ENCODE measurements at regions of chr3 and their contacts with region 1.

Region 1: GRCh38 chr3:23916886-23917678 is at the starts of genes NKIRAS1 and RPL15:
- DNase-seq: peak; percentile 98
- H3K4me3 Mint-ChIP-seq: peak within 1 kb of the TSS; percentile 92
- H3K27ac Mint-ChIP-seq: peak within 1 kb of the TSS; percentile 76
- H3K4me1 Mint-ChIP-seq: peaks cover 26% of the 10 kb centered on the region
- H3K27me3 Mint-ChIP-seq: no peaks in the 10 kb centered on the region
- CTCF ChIP-seq: peak; percentile 42
- total RNA-seq, gene NKIRAS1: 6.8 and 9.7 TPM in 2 replicates
- total RNA-seq, gene RPL15: 2,310 and 2,617 TPM in 2 replicates

Region 2: DNA sequence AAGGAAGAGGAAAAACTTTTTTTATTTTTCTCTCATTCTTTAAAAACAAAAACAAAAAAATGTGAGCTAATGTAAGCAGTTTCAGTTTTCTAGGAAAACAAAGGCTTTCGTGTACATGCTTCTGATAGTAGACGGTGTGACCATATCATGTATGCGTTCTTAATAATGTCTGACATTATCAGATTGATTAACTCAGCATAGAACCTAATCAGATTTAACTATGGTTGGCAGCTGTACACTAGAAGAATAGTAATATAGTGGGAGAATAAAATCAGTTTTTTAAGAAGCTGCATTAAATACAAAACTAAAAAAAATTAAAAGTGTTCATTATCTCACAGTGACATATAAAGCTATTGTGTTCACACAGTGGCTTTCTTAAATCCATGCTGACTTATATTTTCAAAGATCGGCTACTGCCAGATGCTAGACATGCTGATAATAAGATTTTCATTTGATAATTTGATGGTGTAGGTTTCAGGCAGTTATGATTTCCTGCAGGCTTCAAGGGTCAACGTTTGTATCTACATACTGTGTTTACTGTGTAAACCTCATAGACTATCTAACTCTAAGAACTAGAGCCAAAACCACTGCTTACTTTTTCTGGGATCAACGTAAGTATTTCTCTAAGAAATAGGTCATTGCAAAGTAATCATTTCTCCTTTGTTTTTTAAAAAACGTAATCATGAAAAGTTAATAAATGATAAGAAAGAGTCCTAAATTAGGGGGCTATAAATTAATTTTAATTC is 640.0 kb before region 1 on chr3:
- CTCF ChIA-PET with region 1: no interaction called
- POLR2A ChIA-PET with region 1: no interaction called
- intact Hi-C with region 1: no loop called
- DNase-seq: no peak
- H3K4me3 Mint-ChIP-seq: no peak overlapping the region
- H3K27ac Mint-ChIP-seq: no peak overlapping the region
- H3K4me1 Mint-ChIP-seq: peaks cover 11% of the 10 kb centered on the region
- H3K27me3 Mint-ChIP-seq: no peaks in the 10 kb centered on the region
- CTCF ChIP-seq: no peak

Region 3: GRCh38 chr3:23805633-23806533 is 111.2 kb before region 1 on chr3 and contains the start of gene UBE2E1:
- CTCF ChIA-PET with region 1: no interaction called
- POLR2A ChIA-PET with region 1: interaction called, 29 read pairs
- intact Hi-C with region 1: no loop called
- DNase-seq: peak; percentile 60
- H3K4me3 Mint-ChIP-seq: peak within 1 kb of the TSS; percentile 92
- H3K27ac Mint-ChIP-seq: peak within 1 kb of the TSS; percentile 96
- H3K4me1 Mint-ChIP-seq: peaks cover 40% of the 10 kb centered on the region
- H3K27me3 Mint-ChIP-seq: no peaks in the 10 kb centered on the region
- CTCF ChIP-seq: no peak
- total RNA-seq, gene UBE2E1: 128 and 130 TPM in 2 replicates

Region 4: DNA sequence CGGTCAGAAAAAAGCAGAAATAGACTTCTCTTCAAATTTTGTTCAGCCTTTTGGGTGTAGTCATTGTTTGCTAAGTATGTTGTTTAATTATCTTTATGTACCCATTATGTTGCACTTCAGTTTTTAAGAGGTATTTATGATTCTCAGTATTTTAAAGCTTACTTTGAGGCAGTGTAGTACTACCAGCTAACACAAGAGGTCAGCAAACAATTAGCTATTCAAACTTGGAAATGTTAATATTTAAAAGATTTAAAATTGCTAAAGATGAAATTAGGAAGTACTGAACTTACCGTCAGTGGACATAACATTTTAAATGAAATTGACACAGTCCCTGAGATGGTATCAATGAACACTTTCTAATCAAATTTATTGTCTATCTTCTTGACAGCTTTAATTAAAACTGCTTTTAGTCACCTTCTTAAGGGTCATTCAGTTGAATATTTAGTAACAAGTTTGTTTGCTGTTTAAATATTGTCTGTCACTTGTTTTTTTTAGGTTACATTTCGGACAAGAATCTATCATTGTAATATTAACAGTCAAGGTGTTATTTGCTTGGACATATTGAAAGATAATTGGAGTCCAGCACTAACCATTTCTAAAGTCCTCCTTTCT is 28.4 kb before region 1 on chr3:
- CTCF ChIA-PET with region 1: interaction called, 4 read pairs
- POLR2A ChIA-PET with region 1: interaction called, 28 read pairs
- intact Hi-C with region 1: no loop called
- DNase-seq: peak; percentile 35
- H3K4me3 Mint-ChIP-seq: no peak overlapping the region
- H3K27ac Mint-ChIP-seq: no peak overlapping the region
- H3K4me1 Mint-ChIP-seq: peaks cover 6% of the 10 kb centered on the region
- H3K27me3 Mint-ChIP-seq: no peaks in the 10 kb centered on the region
- CTCF ChIP-seq: peak; percentile 72

Region 5: DNA sequence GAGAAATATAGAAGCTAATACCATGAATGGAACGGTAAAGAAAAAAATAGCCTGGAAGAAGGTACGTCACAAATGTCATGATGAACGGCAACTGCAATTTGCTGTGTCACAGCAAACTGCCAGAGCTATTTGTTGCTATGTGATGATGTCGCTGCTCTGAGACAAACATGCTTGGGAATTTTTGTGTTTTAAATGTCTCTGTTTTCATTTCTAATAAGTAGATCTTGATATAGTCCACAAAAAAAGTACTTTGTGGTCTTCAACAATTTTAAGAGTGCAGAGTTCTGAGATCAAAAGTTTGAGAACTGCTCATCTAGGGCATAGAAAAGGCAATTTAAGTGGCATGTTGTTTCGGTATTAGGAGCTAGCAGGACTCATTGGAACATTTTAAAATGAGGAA is 23.7 kb after region 1 on chr3:
- CTCF ChIA-PET with region 1: interaction called, 3 read pairs
- POLR2A ChIA-PET with region 1: interaction called, 234 read pairs
- intact Hi-C with region 1: no loop called
- DNase-seq: no peak
- H3K4me3 Mint-ChIP-seq: no peak overlapping the region
- H3K27ac Mint-ChIP-seq: no peak overlapping the region
- H3K4me1 Mint-ChIP-seq: peaks cover 11% of the 10 kb centered on the region
- H3K27me3 Mint-ChIP-seq: no peaks in the 10 kb centered on the region
- CTCF ChIP-seq: no peak

Region 6: DNA sequence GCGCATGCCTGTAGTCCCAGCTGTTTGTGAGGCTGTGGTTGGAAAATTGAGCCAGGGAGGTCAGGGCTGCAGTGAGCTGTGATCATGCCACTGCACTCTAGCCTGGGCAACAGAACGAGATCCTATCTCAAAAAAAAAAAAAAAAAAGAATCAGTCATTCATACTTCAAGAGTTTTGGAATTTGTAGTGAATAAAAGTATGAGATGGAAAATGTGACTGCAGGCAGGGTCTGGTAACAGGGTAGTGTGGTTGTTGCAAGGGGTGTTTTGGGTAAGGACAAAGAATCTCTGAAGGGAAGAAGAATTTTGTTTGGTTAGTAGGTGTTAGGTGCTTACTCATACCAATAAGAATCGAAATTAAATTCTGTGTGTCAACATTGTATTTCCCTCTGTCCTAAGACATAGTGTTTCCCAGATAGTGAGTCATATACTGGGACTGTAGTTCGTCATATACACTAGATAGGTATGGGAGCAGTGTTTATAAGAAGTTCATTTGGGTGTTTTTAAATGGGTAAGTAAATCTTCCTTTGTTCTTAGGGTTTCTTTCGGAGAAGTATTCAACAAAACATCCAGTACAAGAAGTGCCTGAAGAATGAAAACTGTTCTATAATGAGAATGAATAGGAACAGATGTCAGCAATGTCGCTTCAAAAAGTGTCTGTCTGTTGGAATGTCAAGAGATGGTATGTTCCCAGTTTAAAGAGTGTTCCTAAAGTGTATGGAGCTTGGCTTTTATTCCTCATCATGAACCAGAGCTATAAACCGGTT is 42.2 kb after region 1 on chr3:
- CTCF ChIA-PET with region 1: interaction called, 3 read pairs
- POLR2A ChIA-PET with region 1: interaction called, 61 read pairs
- intact Hi-C with region 1: no loop called
- DNase-seq: peak; percentile 88
- H3K4me3 Mint-ChIP-seq: peak overlapping the region; percentile 20
- H3K27ac Mint-ChIP-seq: peak overlapping the region; percentile 61
- H3K4me1 Mint-ChIP-seq: peaks cover 14% of the 10 kb centered on the region
- H3K27me3 Mint-ChIP-seq: no peaks in the 10 kb centered on the region
- CTCF ChIP-seq: no peak

Region 7: DNA sequence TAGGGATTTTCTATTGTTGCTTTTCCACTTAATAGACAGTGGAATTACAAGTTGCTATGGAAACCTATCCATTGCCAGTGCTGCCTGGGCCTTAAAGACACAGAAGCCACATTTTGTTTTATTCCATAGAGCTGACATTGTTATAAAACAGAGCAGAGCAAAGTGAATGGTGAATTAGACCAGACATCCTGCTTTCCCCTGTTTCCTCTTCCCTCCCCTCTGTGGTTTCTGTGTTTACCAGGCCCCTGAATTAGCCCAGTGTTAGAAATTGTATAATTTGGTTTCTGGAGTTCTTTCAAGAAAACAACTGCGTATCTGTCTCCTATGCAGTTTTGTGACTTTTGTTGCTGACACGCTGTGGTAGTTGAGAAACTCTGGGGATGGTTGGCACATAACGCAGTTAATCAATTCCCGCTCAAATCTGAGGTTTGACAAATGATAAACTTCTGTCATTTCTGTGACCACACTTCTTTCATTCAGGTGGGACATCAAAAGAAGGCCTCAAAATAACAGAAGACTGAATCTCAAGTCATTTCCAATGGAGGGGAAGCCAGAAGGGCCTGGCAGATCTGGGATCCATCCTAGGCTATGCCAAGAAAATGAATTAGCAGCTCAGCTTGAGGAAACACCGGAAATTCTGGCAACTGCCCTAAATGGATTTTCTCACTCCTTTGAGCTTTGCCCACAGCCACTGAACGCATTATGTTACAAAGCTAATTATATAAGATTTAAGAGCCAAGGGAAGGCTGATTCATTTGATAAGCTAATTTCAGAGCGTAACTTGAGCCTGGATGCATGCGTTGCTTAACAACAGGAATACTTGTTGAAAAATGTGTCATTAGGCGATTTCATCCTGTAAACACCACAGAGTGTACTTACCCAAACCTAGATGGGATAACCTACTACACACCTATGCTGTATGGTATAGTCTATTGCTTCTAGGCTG is 74.9 kb after region 1 on chr3:
- CTCF ChIA-PET with region 1: no interaction called
- POLR2A ChIA-PET with region 1: interaction called, 5 read pairs
- intact Hi-C with region 1: loop called (anchors 5 kb)
- DNase-seq: peak; percentile 65
- H3K4me3 Mint-ChIP-seq: no peak overlapping the region
- H3K27ac Mint-ChIP-seq: no peak overlapping the region
- H3K4me1 Mint-ChIP-seq: no peaks in the 10 kb centered on the region
- H3K27me3 Mint-ChIP-seq: no peaks in the 10 kb centered on the region
- CTCF ChIP-seq: no peak